Caco-2 (cell line): ENCODE measurements at regions of chr3 and their contacts with region 1.

Region 1: DNA sequence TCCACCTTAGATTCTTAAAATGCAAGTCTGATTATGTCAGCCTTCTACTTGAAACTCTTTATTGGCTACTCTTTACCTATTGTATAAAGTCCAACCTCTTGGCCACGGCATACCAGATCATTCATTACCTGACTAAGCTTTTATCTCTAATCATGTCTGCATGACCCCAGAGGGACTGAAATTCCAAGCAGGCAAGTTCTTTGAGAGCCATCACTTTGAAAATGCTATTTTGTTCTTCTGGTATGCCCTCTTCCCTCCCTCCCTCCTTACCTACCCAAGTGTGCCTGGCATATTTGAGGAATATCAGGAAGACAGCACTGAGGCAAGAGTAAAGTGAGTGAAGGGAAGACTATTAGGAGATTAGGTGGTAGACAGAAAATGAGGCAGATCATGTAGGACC is 57.5 kb downstream of the KCNMB2 start:
- DNase-seq: peak; percentile 43 to 63
- H3K4me3 ChIP-seq: no peak overlapping the region
- H3K4me3 Mint-ChIP-seq: peak overlapping the region; percentile 14
- H3K27ac Mint-ChIP-seq: peak overlapping the region; percentile 60
- H3K4me1 ChIP-seq: peaks cover 35% of the 10 kb centered on the region
- H3K4me1 Mint-ChIP-seq: peaks cover 16% of the 10 kb centered on the region
- H3K27me3 ChIP-seq: no peaks in the 10 kb centered on the region
- H3K27me3 Mint-ChIP-seq: no peaks in the 10 kb centered on the region
- CTCF ChIP-seq: no peak

Region 2: GRCh38 chr3:178663201-178663934 is 69.6 kb after region 1 on chr3:
- CTCF ChIA-PET with region 1: no interaction called
- POLR2A ChIA-PET with region 1: no interaction called
- intact Hi-C with region 1: loop called (anchors 5 kb)
- DNase-seq: no peak
- H3K4me3 ChIP-seq: no peak overlapping the region
- H3K4me3 Mint-ChIP-seq: no peak overlapping the region
- H3K27ac Mint-ChIP-seq: peak overlapping the region; percentile 84
- H3K4me1 ChIP-seq: peaks cover 32% of the 10 kb centered on the region
- H3K4me1 Mint-ChIP-seq: peaks cover 28% of the 10 kb centered on the region
- H3K27me3 ChIP-seq: no peaks in the 10 kb centered on the region
- H3K27me3 Mint-ChIP-seq: no peaks in the 10 kb centered on the region
- CTCF ChIP-seq: no peak